ENCODE measurements at regions of chr3 and their contacts with region 1.

Region 1: GRCh38 chr3:170052398-170052797 is 14.6 kb downstream of the GPR160 start:
- DNase-seq: no peak
- H3K27ac ChIP-seq: no peak overlapping the region
- CTCF ChIP-seq: no peak

Region 2: GRCh38 chr3:169818316-169818715 is 234.1 kb before region 1 on chr3:
- CTCF ChIA-PET with region 1: no interaction called
- POLR2A ChIA-PET with region 1: no interaction called
- DNase-seq: no peak
- H3K27ac ChIP-seq: no peak overlapping the region
- CTCF ChIP-seq: no peak

Region 3: DNA sequence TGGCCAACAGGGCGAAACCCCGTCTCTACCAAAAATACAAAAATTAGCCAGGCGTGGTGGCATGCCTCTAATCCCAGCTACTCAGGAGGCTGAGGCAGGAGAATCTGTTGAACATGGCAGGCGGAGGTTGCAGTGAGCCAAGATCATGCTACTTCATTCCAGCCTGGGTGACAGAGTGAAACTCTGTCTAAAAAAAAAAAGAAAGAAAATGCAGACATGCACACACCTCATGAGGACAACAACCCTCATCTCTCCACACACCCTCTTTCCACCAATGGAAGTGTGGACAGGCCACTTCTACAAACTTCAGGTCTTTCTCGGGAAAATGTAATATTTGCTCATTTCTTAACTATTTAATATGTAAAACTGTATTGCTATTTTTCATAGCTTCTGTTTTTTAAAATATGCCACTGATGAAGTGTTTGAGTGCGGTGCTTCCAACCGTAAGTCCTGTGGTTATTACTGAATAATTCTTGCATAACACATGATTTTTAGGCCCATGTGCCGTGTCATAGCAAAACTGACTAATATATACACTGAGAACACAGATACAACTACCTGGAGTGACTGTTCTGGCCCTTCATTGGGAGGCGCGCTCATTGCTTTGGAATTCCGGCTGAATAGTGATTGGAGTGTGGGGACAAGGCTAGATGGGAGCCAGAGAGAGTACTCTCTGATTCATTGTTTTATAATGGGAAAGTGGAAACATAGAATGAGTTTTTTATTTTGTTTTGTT is 205.8 kb before region 1 on chr3:
- CTCF ChIA-PET with region 1: interaction called, 11 read pairs
- POLR2A ChIA-PET with region 1: no interaction called
- DNase-seq: peak; percentile 82
- H3K27ac ChIP-seq: peak overlapping the region; percentile 66
- CTCF ChIP-seq: no peak

Measured in RWPE1 (cell line).